ENCODE measurements at regions of chrX and their contacts with region 1.

Region 1: DNA sequence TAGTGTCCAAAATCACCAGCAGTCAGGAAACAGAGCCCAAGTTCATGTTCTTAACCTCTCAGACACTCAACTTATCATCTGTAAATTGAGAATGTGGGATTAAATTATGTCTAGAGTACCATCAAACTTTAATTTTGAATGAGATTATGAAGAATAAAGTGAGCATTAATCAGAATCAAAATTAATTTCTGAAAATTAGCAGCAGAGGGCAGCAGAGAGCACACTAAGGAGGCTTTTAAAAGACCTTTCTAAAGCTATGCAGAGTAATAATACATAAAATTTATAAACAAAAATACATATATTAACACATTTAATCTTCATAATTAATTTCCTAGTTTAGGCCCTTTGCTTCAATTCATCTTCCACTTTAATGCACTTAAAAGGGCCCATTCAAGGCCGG is 7.1 kb downstream of the TASL start:
- DNase-seq: no peak
- ATAC-seq: no peak
- H3K4me3 Mint-ChIP-seq: no peak overlapping the region
- H3K27ac Mint-ChIP-seq: no peak overlapping the region
- H3K4me1 Mint-ChIP-seq: peaks cover 16% of the 10 kb centered on the region
- H3K27me3 Mint-ChIP-seq: no peaks in the 10 kb centered on the region
- CTCF ChIP-seq: peak; percentile 69

Region 2: DNA sequence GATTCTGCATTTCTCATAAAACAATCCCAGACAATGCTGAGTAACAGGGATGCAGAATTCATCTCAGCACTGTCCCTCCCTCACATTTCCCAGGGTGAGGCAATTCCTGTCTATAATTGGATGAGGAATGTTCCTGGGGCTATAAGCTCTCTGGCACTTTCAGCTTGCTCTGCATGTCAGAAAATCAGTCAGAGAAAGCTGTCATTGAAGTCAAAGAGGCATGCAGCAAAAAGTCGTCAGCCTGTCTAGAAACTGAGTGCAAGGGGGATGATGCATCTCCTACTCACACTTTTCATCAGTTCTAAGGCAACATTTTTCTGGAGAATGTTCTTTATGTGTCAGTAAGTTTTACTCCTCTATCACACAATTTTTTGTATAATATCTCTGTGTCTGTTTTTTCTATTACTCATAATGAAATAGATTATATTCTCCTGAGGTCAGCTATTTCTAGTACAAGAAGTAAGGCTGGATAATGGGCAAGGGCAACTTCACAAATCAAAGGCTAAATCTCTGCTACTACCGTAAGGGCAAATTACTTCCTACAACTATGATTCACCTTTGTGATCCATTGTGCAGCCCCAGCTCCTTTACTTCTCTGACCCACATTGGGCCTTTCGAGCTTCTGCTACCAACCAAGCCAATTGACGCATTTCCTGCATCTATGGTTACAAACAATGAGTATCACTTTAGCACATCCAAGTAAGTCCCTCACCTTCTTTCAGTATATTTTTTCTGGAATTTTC is 48.9 kb before region 1 on chrX:
- CTCF ChIA-PET with region 1: no interaction called
- POLR2A ChIA-PET with region 1: no interaction called
- intact Hi-C with region 1: no loop called
- DNase-seq: no peak
- ATAC-seq: no peak
- H3K4me3 Mint-ChIP-seq: no peak overlapping the region
- H3K27ac Mint-ChIP-seq: no peak overlapping the region
- H3K4me1 Mint-ChIP-seq: no peaks in the 10 kb centered on the region
- H3K27me3 Mint-ChIP-seq: no peaks in the 10 kb centered on the region
- CTCF ChIP-seq: no peak

Region 3: DNA sequence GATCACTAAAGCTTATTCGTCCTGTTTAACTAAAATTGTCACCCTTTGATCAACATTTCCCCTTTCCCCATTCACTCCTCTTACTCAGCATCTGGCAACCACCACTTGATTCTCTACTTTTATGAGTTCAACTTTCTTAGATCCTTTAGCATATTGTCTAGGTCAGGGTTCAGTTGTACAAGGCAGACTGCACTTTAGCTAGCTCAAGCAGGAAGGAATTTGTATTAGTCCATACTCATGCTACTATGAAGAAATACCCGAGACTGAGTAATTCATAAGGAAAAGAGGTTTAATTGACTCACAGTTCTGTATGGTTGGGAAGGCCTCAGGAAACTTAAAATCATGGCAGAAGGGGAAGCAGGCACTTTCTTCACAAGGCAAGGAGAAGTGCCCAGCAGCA is 37.2 kb before region 1 on chrX:
- CTCF ChIA-PET with region 1: no interaction called
- POLR2A ChIA-PET with region 1: no interaction called
- intact Hi-C with region 1: no loop called
- DNase-seq: no peak
- ATAC-seq: no peak
- H3K4me3 Mint-ChIP-seq: no peak overlapping the region
- H3K27ac Mint-ChIP-seq: no peak overlapping the region
- H3K4me1 Mint-ChIP-seq: no peaks in the 10 kb centered on the region
- H3K27me3 Mint-ChIP-seq: no peaks in the 10 kb centered on the region
- CTCF ChIP-seq: no peak

Region 4: GRCh38 chrX:30593435-30594200 is 23.1 kb after region 1 on chrX:
- CTCF ChIA-PET with region 1: interaction called, 30 read pairs
- POLR2A ChIA-PET with region 1: no interaction called
- intact Hi-C with region 1: no loop called
- DNase-seq: peak; percentile 45
- ATAC-seq: no peak
- H3K4me3 Mint-ChIP-seq: no peak overlapping the region
- H3K27ac Mint-ChIP-seq: no peak overlapping the region
- H3K4me1 Mint-ChIP-seq: peaks cover 16% of the 10 kb centered on the region
- H3K27me3 Mint-ChIP-seq: no peaks in the 10 kb centered on the region
- CTCF ChIP-seq: no peak

Region 5: GRCh38 chrX:30652527-30653414 is 82.3 kb after region 1 on chrX:
- CTCF ChIA-PET with region 1: no interaction called
- POLR2A ChIA-PET with region 1: no interaction called
- intact Hi-C with region 1: loop called (anchors 10 kb)
- DNase-seq: peak; percentile 93
- ATAC-seq: peak; percentile 84
- H3K4me3 Mint-ChIP-seq: peak overlapping the region; percentile 86
- H3K27ac Mint-ChIP-seq: peak overlapping the region; percentile 93
- H3K4me1 Mint-ChIP-seq: peaks cover 40% of the 10 kb centered on the region
- H3K27me3 Mint-ChIP-seq: no peaks in the 10 kb centered on the region
- CTCF ChIP-seq: no peak

Measured in activated CD8-positive, alpha-beta T cell treated with anti-CD3 and anti-CD28 coated beads for 36 hours (primary cell).